ENCODE measurements at regions of chr4 and their contacts with region 1.

Region 1: GRCh38 chr4:44713125-44713524 is 13.2 kb downstream of the GNPDA2 start:
- DNase-seq: no peak
- H3K4me3 Mint-ChIP-seq: no peak overlapping the region
- H3K27ac Mint-ChIP-seq: no peak overlapping the region
- H3K4me1 Mint-ChIP-seq: no peaks in the 10 kb centered on the region
- H3K27me3 Mint-ChIP-seq: no peaks in the 10 kb centered on the region

Region 2: DNA sequence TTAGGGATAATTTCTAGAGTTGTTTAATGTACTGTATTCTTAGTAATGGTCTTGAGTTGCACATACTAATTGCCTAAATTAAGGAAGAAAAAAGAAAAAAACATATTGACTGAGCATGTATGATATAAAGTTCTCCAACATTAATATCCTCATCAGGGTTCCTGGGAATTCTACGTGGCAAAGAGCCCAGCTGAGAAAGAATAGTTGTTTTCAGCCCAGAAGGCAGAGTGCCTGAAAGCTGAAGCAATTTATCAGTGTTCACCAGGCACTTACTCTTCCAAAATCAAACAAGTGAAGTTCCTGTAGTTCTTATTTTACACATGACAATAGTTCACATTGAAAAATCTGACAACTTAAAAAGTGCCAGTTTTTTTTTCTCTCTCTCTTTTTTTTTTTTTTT is 89.4 kb before region 1 on chr4:
- intact Hi-C with region 1: no loop called
- DNase-seq: no peak
- H3K4me3 Mint-ChIP-seq: no peak overlapping the region
- H3K27ac Mint-ChIP-seq: no peak overlapping the region
- H3K4me1 Mint-ChIP-seq: no peaks in the 10 kb centered on the region
- H3K27me3 Mint-ChIP-seq: no peaks in the 10 kb centered on the region

Region 3: GRCh38 chr4:44638091-44638490 is 75.0 kb before region 1 on chr4:
- intact Hi-C with region 1: no loop called
- DNase-seq: no peak
- H3K4me3 Mint-ChIP-seq: no peak overlapping the region
- H3K27ac Mint-ChIP-seq: no peak overlapping the region
- H3K4me1 Mint-ChIP-seq: no peaks in the 10 kb centered on the region
- H3K27me3 Mint-ChIP-seq: no peaks in the 10 kb centered on the region

Region 4: DNA sequence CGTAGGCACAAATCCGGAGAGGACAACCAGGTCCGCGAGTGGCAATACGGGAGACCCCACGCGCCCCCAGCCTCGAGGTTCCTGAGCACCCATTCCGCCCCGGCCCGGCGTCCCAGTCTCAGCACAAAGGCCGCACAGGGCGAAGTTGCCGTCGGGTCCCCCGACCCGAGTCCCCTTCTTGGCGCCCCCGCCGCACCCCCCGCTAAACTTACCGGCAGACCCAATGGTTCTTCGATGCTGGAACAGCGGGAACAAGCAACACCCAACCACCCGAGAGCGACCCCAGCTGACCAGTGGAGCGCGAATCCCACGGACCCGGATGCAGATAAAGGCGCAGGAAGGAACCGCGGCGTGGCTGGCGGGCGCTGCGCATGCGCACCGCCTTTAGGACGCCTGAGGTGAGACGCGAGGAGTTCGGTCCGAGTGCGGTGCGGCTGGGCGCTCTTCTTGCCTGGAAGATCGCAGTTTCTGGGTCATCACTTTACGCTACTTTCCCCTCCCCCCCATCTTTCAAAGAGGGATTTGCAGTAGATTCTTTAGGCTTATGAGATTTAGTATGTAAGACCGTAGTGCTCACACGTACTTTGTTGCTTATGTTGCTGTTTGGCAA is 13.2 kb after region 1 on chr4 and contains the start of gene GNPDA2:
- intact Hi-C with region 1: loop called (anchors 2 kb)
- DNase-seq: peak; percentile 76
- H3K4me3 Mint-ChIP-seq: peak within 1 kb of the TSS; percentile 98
- H3K27ac Mint-ChIP-seq: peak within 1 kb of the TSS; percentile 72
- H3K4me1 Mint-ChIP-seq: peaks cover 24% of the 10 kb centered on the region
- H3K27me3 Mint-ChIP-seq: peaks cover under 1% of the 10 kb centered on the region
- total RNA-seq, gene GNPDA2: 13.3 and 16.6 TPM in 2 replicates

Region 5: GRCh38 chr4:44760142-44760898 is 47.2 kb after region 1 on chr4:
- intact Hi-C with region 1: no loop called
- DNase-seq: no peak
- H3K4me3 Mint-ChIP-seq: no peak overlapping the region
- H3K27ac Mint-ChIP-seq: no peak overlapping the region
- H3K4me1 Mint-ChIP-seq: no peaks in the 10 kb centered on the region
- H3K27me3 Mint-ChIP-seq: no peaks in the 10 kb centered on the region